Activated CD4-positive, alpha-beta memory T cell treated with anti-CD3 and anti-CD28 coated beads for 36 hours (primary cell): ENCODE measurements at regions of chr17 and their contacts with region 1.

Region 1: GRCh38 chr17:65294179-65294720 is 157.1 kb downstream of the RGS9 start:
- DNase-seq: peak; percentile 71
- H3K4me3 Mint-ChIP-seq: no peak overlapping the region
- H3K27ac Mint-ChIP-seq: no peak overlapping the region
- H3K4me1 Mint-ChIP-seq: no peaks in the 10 kb centered on the region
- H3K27me3 Mint-ChIP-seq: no peaks in the 10 kb centered on the region

Region 2: DNA sequence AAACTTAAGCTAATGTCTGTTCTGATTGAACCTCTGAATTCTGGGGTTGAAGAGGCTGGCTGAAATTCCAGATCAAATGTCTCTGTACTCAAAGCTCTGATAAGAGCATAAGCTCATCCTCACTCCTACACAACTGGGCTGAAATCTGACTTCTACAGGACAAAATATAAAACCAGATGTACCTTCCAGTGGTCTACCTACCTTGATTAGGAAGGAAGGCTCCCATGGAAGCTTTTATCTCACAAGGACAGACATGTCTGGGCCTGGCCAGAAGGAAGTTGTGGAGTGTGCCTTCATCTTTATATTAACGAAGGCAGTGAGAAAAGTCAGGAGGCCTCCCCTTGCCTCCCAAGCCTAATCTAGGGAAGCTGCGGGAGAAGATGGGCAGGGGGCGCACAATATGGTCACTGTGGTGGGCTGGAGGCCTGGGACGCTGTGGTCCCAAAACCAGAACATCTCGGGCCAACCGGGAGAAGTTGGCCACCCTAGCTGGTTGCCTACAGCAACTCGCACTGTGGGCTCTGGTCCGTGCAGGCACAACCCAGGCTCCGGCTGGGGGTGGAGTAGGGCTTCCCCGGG is 319.4 kb before region 1 on chr17:
- CTCF ChIA-PET with region 1: no interaction called
- POLR2A ChIA-PET with region 1: no interaction called
- intact Hi-C with region 1: no loop called
- DNase-seq: no peak
- H3K4me3 Mint-ChIP-seq: peak overlapping the region; percentile 82
- H3K27ac Mint-ChIP-seq: peak overlapping the region; percentile 100
- H3K4me1 Mint-ChIP-seq: peaks cover 60% of the 10 kb centered on the region
- H3K27me3 Mint-ChIP-seq: no peaks in the 10 kb centered on the region

Region 3: DNA sequence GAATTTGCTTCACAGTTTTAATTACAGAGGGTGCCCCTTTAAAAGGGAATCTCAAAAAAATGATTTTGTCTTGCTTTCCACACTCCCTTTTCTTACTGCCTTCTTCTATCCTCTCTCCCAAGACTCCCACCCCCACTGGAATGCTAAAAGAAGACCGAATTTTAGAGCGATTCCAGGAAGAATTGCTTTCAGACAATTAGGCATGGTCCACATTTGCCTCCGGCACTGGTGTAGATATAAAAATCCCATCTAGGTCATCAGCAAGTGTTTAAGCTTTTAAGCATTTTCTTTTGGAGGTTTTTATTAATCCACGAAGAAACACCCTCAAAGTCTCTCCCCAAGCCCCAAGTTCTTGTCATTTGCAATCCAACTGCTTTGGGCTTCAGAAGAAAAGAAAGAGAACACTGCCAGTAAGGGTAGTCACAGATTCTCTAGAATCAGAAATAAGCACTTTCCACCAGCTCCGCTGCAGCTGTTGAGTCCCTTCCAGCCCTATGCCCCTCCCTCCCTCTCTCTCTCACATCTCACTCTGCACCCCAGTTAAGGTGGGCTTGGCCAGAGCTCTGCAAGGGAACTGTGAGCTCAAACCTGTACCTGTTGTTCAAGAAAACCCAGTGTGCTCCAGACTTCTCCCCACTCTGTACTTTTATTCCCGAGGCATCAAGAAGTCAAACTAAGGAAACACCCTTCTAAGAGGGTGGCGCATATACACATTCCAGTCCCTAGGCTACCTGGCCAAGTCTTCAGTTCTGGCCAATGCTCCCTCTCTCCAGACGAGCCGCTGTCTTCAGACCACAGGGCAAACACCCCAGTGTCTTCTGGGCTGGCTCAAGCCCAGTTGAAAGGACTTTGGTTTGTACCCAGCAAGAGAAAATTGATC is 13.1 kb after region 1 on chr17:
- CTCF ChIA-PET with region 1: interaction called, 12 read pairs
- POLR2A ChIA-PET with region 1: no interaction called
- intact Hi-C with region 1: no loop called
- DNase-seq: no peak
- H3K4me3 Mint-ChIP-seq: no peak overlapping the region
- H3K27ac Mint-ChIP-seq: no peak overlapping the region
- H3K4me1 Mint-ChIP-seq: no peaks in the 10 kb centered on the region
- H3K27me3 Mint-ChIP-seq: peaks cover 17% of the 10 kb centered on the region

Region 4: GRCh38 chr17:65794572-65794971 is 500.3 kb after region 1 on chr17:
- CTCF ChIA-PET with region 1: interaction called, 13 read pairs
- POLR2A ChIA-PET with region 1: no interaction called
- intact Hi-C with region 1: loop called (anchors 10 kb)
- DNase-seq: no peak
- H3K4me3 Mint-ChIP-seq: no peak overlapping the region
- H3K27ac Mint-ChIP-seq: no peak overlapping the region
- H3K4me1 Mint-ChIP-seq: peaks cover 11% of the 10 kb centered on the region
- H3K27me3 Mint-ChIP-seq: no peaks in the 10 kb centered on the region

Region 5: GRCh38 chr17:65988081-65988850 is 694.0 kb after region 1 on chr17:
- CTCF ChIA-PET with region 1: interaction called, 38 read pairs
- POLR2A ChIA-PET with region 1: no interaction called
- intact Hi-C with region 1: loop called (anchors 2 kb)
- DNase-seq: no peak
- H3K4me3 Mint-ChIP-seq: no peak overlapping the region
- H3K27ac Mint-ChIP-seq: no peak overlapping the region
- H3K4me1 Mint-ChIP-seq: no peaks in the 10 kb centered on the region
- H3K27me3 Mint-ChIP-seq: no peaks in the 10 kb centered on the region

Region 6: DNA sequence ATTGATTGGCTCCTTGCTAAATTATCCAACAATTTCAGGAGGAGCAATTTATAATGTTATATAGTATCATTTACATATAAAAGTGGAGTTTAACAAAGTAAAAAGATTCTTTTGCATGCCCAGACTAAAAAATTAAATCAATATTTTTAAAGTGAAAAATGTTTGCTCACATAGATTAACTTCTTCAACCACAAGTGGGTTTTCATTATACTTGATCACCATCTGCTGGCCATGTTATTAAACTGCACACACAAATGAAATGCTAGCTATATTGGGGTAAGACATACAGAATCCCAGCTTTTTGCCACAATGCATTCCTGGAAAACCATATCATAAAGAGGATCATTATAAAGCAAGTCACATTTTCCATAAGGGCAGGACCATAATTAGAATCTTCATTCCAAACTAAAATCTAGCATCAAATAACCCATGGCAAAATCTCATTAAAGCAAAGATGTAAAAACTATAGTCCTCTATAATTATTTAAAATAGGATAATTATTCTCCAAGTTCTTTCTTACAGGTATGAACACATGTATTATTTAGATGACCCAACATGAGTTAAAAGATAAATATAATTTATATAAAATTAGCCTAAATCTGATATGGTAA is 871.4 kb after region 1 on chr17:
- CTCF ChIA-PET with region 1: interaction called, 60 read pairs
- POLR2A ChIA-PET with region 1: no interaction called
- intact Hi-C with region 1: loop called (anchors 1 kb)
- DNase-seq: no peak
- H3K4me3 Mint-ChIP-seq: no peak overlapping the region
- H3K27ac Mint-ChIP-seq: no peak overlapping the region
- H3K4me1 Mint-ChIP-seq: peaks cover 12% of the 10 kb centered on the region
- H3K27me3 Mint-ChIP-seq: no peaks in the 10 kb centered on the region